ENCODE measurements at regions of chr16 and their contacts with region 1.

Region 1: DNA sequence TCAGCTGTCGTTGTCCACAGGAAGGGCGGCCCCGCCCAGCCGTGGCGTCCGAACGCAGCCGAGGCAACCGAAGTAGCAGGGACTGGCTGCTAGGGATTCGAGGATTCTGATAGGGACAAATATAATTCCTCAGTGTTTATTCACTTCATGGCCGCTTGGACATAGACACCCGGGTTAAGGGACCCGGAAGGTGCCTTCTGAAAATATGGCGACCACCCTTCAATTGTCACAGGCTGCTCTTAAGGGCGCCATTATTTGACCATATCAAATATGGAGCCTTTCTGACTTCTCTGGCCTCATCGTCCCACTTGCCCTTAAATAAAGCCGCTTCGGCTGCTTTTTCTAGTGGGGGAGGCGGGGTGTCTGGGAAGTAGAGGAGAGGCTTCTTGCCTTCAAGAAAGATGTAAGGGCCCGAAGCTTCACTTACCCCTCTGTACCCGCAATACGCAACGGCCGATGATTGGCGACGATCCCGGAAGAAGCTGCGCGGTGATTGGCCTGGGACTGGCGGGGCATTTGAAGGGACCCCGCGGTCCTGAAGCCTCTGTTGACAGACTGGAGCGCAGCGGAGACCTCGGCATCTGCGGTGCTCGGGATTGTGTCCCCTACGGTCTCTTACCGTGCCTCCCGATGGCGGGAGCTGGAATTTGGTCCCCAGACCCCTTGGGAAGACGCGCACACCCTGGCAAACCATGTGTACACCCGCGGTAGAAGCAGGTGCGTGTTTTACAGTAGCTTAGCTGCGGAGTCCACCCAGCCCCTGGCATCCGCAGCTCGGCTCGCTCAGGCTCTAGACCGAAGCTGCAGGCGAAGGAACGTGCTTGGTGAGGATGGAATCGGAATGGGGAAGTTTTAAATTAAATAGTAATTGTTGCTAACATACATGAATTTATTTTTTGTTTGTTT is at the start of gene ZNF688:
- DNase-seq: peak; percentile 89 to 99 (median 94)
- ATAC-seq: peak; percentile 81
- H3K4me3 ChIP-seq: peak within 1 kb of the TSS; percentile 85 to 86
- H3K4me3 Mint-ChIP-seq: peak within 1 kb of the TSS; percentile 90
- H3K27ac ChIP-seq: peak within 1 kb of the TSS; percentile 84 to 94
- H3K27ac Mint-ChIP-seq: peak within 1 kb of the TSS; percentile 98
- H3K4me1 ChIP-seq: peaks cover 40% of the 10 kb centered on the region
- H3K4me1 Mint-ChIP-seq: peaks cover 34% of the 10 kb centered on the region
- H3K27me3 ChIP-seq: no peaks in the 10 kb centered on the region
- H3K27me3 Mint-ChIP-seq: no peaks in the 10 kb centered on the region
- CTCF ChIP-seq: no peak
- total RNA-seq, gene ZNF688: 6.1 to 7.1 TPM

Region 2: GRCh38 chr16:30526823-30527635 is 44.9 kb before region 1 on chr16:
- CTCF ChIA-PET with region 1: interaction called, 3 read pairs
- POLR2A ChIA-PET with region 1: interaction called, 4 read pairs
- intact Hi-C with region 1: loop called (anchors 2 kb)
- DNase-seq: peak; percentile 53 to 92 (median 86)
- ATAC-seq: peak; percentile 75
- H3K4me3 ChIP-seq: peak overlapping the region; percentile 74 to 75
- H3K4me3 Mint-ChIP-seq: peak overlapping the region; percentile 87
- H3K27ac ChIP-seq: peak overlapping the region; percentile 59 to 69
- H3K27ac Mint-ChIP-seq: peak overlapping the region; percentile 90
- H3K4me1 ChIP-seq: peaks cover 12% of the 10 kb centered on the region
- H3K4me1 Mint-ChIP-seq: peaks cover 24% of the 10 kb centered on the region
- H3K27me3 ChIP-seq: no peaks in the 10 kb centered on the region
- H3K27me3 Mint-ChIP-seq: no peaks in the 10 kb centered on the region
- CTCF ChIP-seq: no peak

Region 3: DNA sequence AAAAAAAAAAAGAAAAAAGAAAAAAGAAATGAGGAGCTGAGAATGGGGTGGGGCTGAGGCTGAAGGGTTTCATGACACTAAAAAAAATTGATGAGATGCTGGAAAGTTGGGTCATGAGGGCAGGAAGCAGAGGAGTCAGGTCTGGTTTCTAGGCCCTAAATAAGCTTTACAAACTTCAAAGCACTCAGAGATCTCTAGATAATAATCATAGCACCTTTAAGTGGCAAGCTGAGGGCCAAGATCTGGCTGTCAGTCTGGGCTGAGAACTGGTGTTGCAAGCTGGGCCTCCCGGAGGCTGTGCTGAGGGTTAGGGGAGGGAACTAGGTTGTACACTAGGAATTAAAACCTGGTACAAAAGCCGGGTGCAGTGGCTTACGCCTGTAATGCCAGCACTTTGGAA is 20.2 kb before region 1 on chr16:
- CTCF ChIA-PET with region 1: interaction called, 14 read pairs
- POLR2A ChIA-PET with region 1: interaction called, 57 read pairs
- intact Hi-C with region 1: no loop called
- DNase-seq: peak in 8 of 9 experiments; percentile 35 to 91 (median 70)
- ATAC-seq: peak; percentile 87
- H3K4me3 ChIP-seq: no peak overlapping the region
- H3K4me3 Mint-ChIP-seq: peak overlapping the region; percentile 51
- H3K27ac ChIP-seq: peak overlapping the region; percentile 19 to 57
- H3K27ac Mint-ChIP-seq: peak overlapping the region; percentile 93
- H3K4me1 ChIP-seq: peaks cover 33% of the 10 kb centered on the region
- H3K4me1 Mint-ChIP-seq: peaks cover 52% of the 10 kb centered on the region
- H3K27me3 ChIP-seq: no peaks in the 10 kb centered on the region
- H3K27me3 Mint-ChIP-seq: no peaks in the 10 kb centered on the region
- CTCF ChIP-seq: no peak

Region 4: GRCh38 chr16:30585400-30586189 is 13.6 kb after region 1 on chr16 and contains the start of gene ZNF785:
- CTCF ChIA-PET with region 1: interaction called, 4 read pairs
- POLR2A ChIA-PET with region 1: interaction called, 26 read pairs
- intact Hi-C with region 1: loop called (anchors 1 kb)
- DNase-seq: peak; percentile 81 to 98 (median 91)
- ATAC-seq: peak; percentile 99
- H3K4me3 ChIP-seq: peak within 1 kb of the TSS; percentile 68 to 78
- H3K4me3 Mint-ChIP-seq: peak within 1 kb of the TSS; percentile 94
- H3K27ac ChIP-seq: peak within 1 kb of the TSS; percentile 44 to 61
- H3K27ac Mint-ChIP-seq: peak within 1 kb of the TSS; percentile 91
- H3K4me1 ChIP-seq: peaks cover 12% of the 10 kb centered on the region
- H3K4me1 Mint-ChIP-seq: peaks cover 27% of the 10 kb centered on the region
- H3K27me3 ChIP-seq: no peaks in the 10 kb centered on the region
- H3K27me3 Mint-ChIP-seq: no peaks in the 10 kb centered on the region
- CTCF ChIP-seq: no peak
- total RNA-seq, gene ZNF785: 5.0 to 6.9 TPM

Region 5: GRCh38 chr16:30609926-30610839 is 38.2 kb after region 1 on chr16 and contains the start of gene ZNF689:
- CTCF ChIA-PET with region 1: interaction called, 3 read pairs
- POLR2A ChIA-PET with region 1: interaction called, 16 read pairs
- intact Hi-C with region 1: loop called (anchors 1 kb)
- DNase-seq: peak; percentile 90 to 98 (median 94)
- ATAC-seq: peak; percentile 88
- H3K4me3 ChIP-seq: peak within 1 kb of the TSS; percentile 69 to 93
- H3K4me3 Mint-ChIP-seq: peak within 1 kb of the TSS; percentile 95
- H3K27ac ChIP-seq: peak within 1 kb of the TSS; percentile 91 to 93
- H3K27ac Mint-ChIP-seq: peak within 1 kb of the TSS; percentile 98
- H3K4me1 ChIP-seq: peaks cover 12% of the 10 kb centered on the region
- H3K4me1 Mint-ChIP-seq: peaks cover 24% of the 10 kb centered on the region
- H3K27me3 ChIP-seq: peaks cover 0 to 2% of the 10 kb centered on the region in 2 experiments
- H3K27me3 Mint-ChIP-seq: no peaks in the 10 kb centered on the region
- CTCF ChIP-seq: no peak
- total RNA-seq, gene ZNF689: 15.6 to 17.5 TPM

Region 6: GRCh38 chr16:30650369-30651123 is 78.6 kb after region 1 on chr16 and contains the start of gene PRR14:
- CTCF ChIA-PET with region 1: no interaction called
- POLR2A ChIA-PET with region 1: interaction called, 11 read pairs
- intact Hi-C with region 1: loop called (anchors 1 kb)
- DNase-seq: peak; percentile 96 to 100 (median 98)
- ATAC-seq: peak; percentile 85
- H3K4me3 ChIP-seq: peak within 1 kb of the TSS; percentile 92 to 100
- H3K4me3 Mint-ChIP-seq: peak within 1 kb of the TSS; percentile 99
- H3K27ac ChIP-seq: peak within 1 kb of the TSS; percentile 86 to 94
- H3K27ac Mint-ChIP-seq: peak within 1 kb of the TSS; percentile 98
- H3K4me1 ChIP-seq: peaks cover 20% of the 10 kb centered on the region
- H3K4me1 Mint-ChIP-seq: peaks cover 22% of the 10 kb centered on the region
- H3K27me3 ChIP-seq: no peaks in the 10 kb centered on the region
- H3K27me3 Mint-ChIP-seq: no peaks in the 10 kb centered on the region
- CTCF ChIP-seq: no peak
- total RNA-seq, gene PRR14: 48.4 to 51.0 TPM